ENCODE measurements at regions of chr2 and their contacts with region 1.

Region 1: DNA sequence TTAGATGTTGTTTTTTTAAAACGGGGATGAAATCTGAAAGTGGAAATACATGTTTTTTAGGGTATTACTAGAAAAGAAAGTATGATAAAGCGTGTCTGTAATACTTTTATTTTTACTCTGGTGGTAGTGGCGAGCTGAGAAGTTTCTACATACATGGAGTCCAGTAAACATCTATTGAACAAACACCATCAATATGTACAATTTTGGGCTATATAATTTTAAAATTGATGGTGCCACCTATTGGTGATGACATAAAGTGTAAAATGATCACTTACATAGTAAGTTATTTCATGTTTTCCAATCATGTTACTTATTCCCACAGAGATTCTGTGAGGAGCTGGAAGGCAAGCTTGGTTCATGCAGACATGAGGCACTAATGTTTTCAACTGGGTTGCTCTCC is 31.5 kb upstream of the NFE2L2 start:
- DNase-seq: peak in 4 of 5 donors; percentile 34 to 49 (median 43)
- H3K4me3 ChIP-seq: no peak overlapping the region
- H3K4me3 Mint-ChIP-seq: peak overlapping the region in 1 of 8 donors; percentile 4
- H3K27ac ChIP-seq: no peak overlapping the region
- H3K27ac Mint-ChIP-seq: peak overlapping the region in 3 of 7 donors; percentile 16 to 72 (median 37)
- H3K4me1 ChIP-seq: peaks cover 9% of the 10 kb centered on the region
- H3K4me1 Mint-ChIP-seq: peaks cover 4 to 7% (median 5%) of the 10 kb centered on the region in 4 donors
- H3K27me3 ChIP-seq: no peaks in the 10 kb centered on the region
- H3K27me3 Mint-ChIP-seq: no peaks in the 10 kb centered on the region

Region 2: GRCh38 chr2:177281400-177282180 is 14.4 kb before region 1 on chr2:
- CTCF ChIA-PET with region 1: interaction called, 22 read pairs
- POLR2A ChIA-PET with region 1: interaction called, 3 read pairs
- intact Hi-C with region 1: no loop called
- DNase-seq: no peak
- H3K4me3 ChIP-seq: no peak overlapping the region
- H3K4me3 Mint-ChIP-seq: no peak overlapping the region
- H3K27ac ChIP-seq: no peak overlapping the region
- H3K27ac Mint-ChIP-seq: peak overlapping the region in 1 of 7 donors; percentile 53
- H3K4me1 ChIP-seq: no peaks in the 10 kb centered on the region
- H3K4me1 Mint-ChIP-seq: no peaks in the 10 kb centered on the region
- H3K27me3 ChIP-seq: no peaks in the 10 kb centered on the region
- H3K27me3 Mint-ChIP-seq: no peaks in the 10 kb centered on the region

Region 3: DNA sequence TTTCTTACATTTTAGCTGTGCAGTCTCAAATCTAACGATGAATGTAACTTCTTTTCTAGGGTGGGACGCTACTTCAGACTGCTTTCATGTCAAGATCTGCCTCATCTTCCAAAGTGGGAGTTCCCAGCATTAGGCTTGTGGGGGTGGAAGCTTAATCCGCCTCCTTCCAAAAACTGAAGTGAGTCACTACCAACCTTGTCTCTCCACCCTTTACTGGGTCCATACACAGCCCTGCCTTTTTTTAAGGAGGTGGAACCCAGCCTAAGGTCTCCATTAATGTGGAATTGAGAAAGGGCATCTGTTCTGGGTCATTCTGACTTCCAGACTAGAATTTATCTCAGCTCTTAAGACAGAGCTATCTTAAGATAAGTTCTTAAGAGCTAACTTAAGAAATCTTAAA is 10.5 kb after region 1 on chr2:
- CTCF ChIA-PET with region 1: interaction called, 14 read pairs
- POLR2A ChIA-PET with region 1: interaction called, 5 read pairs
- intact Hi-C with region 1: no loop called
- DNase-seq: no peak
- H3K4me3 ChIP-seq: no peak overlapping the region
- H3K4me3 Mint-ChIP-seq: no peak overlapping the region
- H3K27ac ChIP-seq: no peak overlapping the region
- H3K27ac Mint-ChIP-seq: peak overlapping the region in 1 of 7 donors; percentile 9
- H3K4me1 ChIP-seq: peaks cover 19% of the 10 kb centered on the region
- H3K4me1 Mint-ChIP-seq: peaks cover 14 to 26% (median 18%) of the 10 kb centered on the region in 4 donors
- H3K27me3 ChIP-seq: no peaks in the 10 kb centered on the region
- H3K27me3 Mint-ChIP-seq: no peaks in the 10 kb centered on the region

Region 4: DNA sequence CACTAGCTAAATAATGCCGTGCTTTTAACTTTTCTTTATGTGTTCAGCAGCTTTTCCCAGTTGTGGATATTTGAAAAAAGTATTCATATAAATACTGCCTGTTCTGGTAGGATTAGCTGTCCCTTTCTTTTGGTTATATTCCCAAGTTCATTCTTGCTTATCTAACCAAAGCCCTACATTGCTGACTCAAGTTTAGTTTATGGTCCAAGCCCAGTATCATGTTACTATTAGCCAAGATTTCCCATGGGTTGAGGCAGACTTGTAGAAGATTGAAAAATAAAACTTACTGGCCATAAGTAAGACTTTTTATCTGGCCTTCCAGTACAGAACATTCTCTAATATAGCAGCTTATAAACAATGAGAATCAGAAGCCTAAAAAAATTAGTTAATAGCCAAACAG is 18.2 kb after region 1 on chr2:
- CTCF ChIA-PET with region 1: interaction called, 14 read pairs
- POLR2A ChIA-PET with region 1: no interaction called
- intact Hi-C with region 1: no loop called
- DNase-seq: no peak
- H3K4me3 ChIP-seq: no peak overlapping the region
- H3K4me3 Mint-ChIP-seq: no peak overlapping the region
- H3K27ac ChIP-seq: no peak overlapping the region
- H3K27ac Mint-ChIP-seq: no peak overlapping the region
- H3K4me1 ChIP-seq: peaks cover 17% of the 10 kb centered on the region
- H3K4me1 Mint-ChIP-seq: peaks cover 10 to 24% (median 15%) of the 10 kb centered on the region in 4 donors
- H3K27me3 ChIP-seq: no peaks in the 10 kb centered on the region
- H3K27me3 Mint-ChIP-seq: no peaks in the 10 kb centered on the region